A549 (cell line): ENCODE measurements at regions of chr17 and their contacts with region 1.

Region 1: DNA sequence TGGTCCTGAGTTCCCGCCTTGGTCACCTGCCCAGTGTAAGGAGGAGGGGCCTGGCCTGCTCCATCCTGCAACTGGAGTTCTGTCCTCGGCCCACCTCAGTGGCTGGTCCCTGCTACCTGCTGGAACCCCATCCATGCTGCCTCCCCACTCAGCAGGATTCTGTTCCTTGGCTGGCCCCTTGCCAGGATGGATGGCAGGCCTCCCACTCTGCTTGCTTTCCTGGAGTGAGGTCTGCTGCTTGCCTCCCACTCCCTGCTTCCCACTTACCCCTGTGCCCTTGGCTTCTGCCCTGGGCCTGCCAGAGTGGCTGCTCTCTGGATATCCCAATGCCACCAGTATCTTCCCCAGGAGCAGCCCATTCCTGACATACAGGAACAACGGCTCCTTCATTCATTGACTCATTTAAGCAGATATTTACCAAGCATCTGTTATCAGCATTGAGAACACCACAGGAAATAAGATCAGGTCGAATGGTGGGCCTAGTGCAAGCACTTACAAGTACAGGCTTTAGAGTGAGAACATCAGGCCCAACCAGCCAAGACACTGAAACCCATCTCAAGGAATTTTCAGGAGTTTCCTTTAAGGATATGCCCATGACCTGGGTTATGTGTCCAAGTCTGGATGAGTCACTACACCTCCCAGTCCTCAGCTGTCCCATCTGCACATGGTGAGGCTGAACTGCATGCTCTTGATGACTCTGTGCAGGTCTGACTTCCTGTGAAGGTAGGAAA is 17.0 kb upstream of the RPRML start:
- DNase-seq: no peak
- ATAC-seq: peak; percentile 40 to 46; a peak in 3 of 6 replicates
- H3K4me3 ChIP-seq: no peak overlapping the region
- H3K27ac ChIP-seq: no peak overlapping the region
- H3K4me1 ChIP-seq: peaks cover 3% of the 10 kb centered on the region; the same call in 1 of the 3 replicates
- CTCF ChIP-seq: no peak
- EP300 ChIP-seq: no peak
- POLR2A ChIP-seq: no peak
- RAD21 ChIP-seq: no peak

Region 2: GRCh38 chr17:46949291-46950174 is 46.5 kb before region 1 on chr17:
- CTCF ChIA-PET with region 1: interaction called, 90 read pairs
- POLR2A ChIA-PET with region 1: no interaction called
- DNase-seq: no peak
- ATAC-seq: peak; percentile 20 to 47; a peak in 4 of 6 replicates
- H3K4me3 ChIP-seq: no peak overlapping the region
- H3K27ac ChIP-seq: no peak overlapping the region
- H3K4me1 ChIP-seq: no peaks in the 10 kb centered on the region
- CTCF ChIP-seq: no peak
- EP300 ChIP-seq: no peak
- POLR2A ChIP-seq: no peak
- RAD21 ChIP-seq: no peak

Region 3: GRCh38 chr17:46984892-46985291 is 11.1 kb before region 1 on chr17:
- CTCF ChIA-PET with region 1: interaction called, 12 read pairs
- POLR2A ChIA-PET with region 1: no interaction called
- DNase-seq: no peak
- ATAC-seq: no peak
- H3K4me3 ChIP-seq: no peak overlapping the region
- H3K27ac ChIP-seq: no peak overlapping the region
- H3K4me1 ChIP-seq: no peaks in the 10 kb centered on the region
- CTCF ChIP-seq: no peak
- EP300 ChIP-seq: no peak
- POLR2A ChIP-seq: no peak
- RAD21 ChIP-seq: no peak

Region 4: GRCh38 chr17:47072886-47073285 is 76.9 kb after region 1 on chr17:
- CTCF ChIA-PET with region 1: no interaction called
- POLR2A ChIA-PET with region 1: no interaction called
- DNase-seq: no peak
- ATAC-seq: no peak
- H3K4me3 ChIP-seq: no peak overlapping the region
- H3K27ac ChIP-seq: no peak overlapping the region
- H3K4me1 ChIP-seq: peaks cover 13% of the 10 kb centered on the region; the same call in 2 of the 3 replicates
- CTCF ChIP-seq: no peak
- EP300 ChIP-seq: no peak
- POLR2A ChIP-seq: no peak
- RAD21 ChIP-seq: no peak

Region 5: GRCh38 chr17:47099987-47100711 is 104.1 kb after region 1 on chr17:
- CTCF ChIA-PET with region 1: no interaction called
- POLR2A ChIA-PET with region 1: no interaction called
- DNase-seq: peak; percentile 71 to 93
- ATAC-seq: peak; percentile 100
- H3K4me3 ChIP-seq: peak overlapping the region; percentile 90
- H3K27ac ChIP-seq: peak overlapping the region; percentile 89 to 94
- H3K4me1 ChIP-seq: peaks cover 13% of the 10 kb centered on the region
- CTCF ChIP-seq: no peak
- EP300 ChIP-seq: no peak
- POLR2A ChIP-seq: peak; percentile 75
- RAD21 ChIP-seq: no peak